Ovary (tissue), 10 donors: ENCODE measurements at regions of chr18 and their contacts with region 1.

Region 1: DNA sequence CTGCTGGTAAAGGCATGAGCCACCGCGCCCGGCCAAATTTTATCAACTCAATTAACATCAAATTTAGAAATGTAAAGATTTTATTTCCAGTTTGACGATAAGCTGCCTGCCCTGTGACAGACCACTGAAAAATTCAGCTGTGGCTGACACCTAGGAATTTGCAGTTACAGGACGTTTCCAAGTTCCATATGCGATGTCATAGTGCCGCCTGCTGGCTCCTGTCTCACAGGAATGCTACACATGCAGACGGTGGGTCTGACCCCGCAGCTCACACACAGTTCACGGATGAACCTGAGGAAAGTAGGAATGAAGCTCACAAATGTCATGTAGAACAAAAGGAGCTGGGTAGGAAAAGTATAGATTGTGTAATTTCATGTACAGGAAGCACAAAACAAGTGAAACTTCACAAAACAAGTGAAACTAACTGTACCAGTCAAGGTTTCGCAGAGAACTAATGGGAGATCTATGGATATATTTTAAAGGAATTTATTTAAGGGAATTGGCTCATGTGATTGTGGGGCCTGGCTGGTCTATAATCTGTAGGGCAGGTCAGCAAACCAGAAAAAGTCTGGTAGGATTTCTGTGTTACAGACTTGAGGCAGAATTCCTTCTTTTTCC is 13.2 kb upstream of the SEH1L start:
- DNase-seq: peak; percentile 76 to 90 (median 89)
- H3K4me3 ChIP-seq: no peak overlapping the region
- H3K27ac ChIP-seq: no peak overlapping the region
- H3K4me1 ChIP-seq: peaks cover 1% of the 10 kb centered on the region
- H3K27me3 ChIP-seq: no peaks in the 10 kb centered on the region
- CTCF ChIP-seq: peak; percentile 65 to 96 (median 92)
- EP300 ChIP-seq: no peak
- POLR2A ChIP-seq: no peak

Region 2: GRCh38 chr18:12726774-12727550 is 207.6 kb before region 1 on chr18:
- intact Hi-C with region 1: loop called (anchors 1 to 5 kb)
- DNase-seq: peak in 4 of 5 donors; percentile 37 to 64 (median 48)
- H3K4me3 ChIP-seq: no peak overlapping the region
- H3K27ac ChIP-seq: no peak overlapping the region
- H3K4me1 ChIP-seq: no peaks in the 10 kb centered on the region
- H3K27me3 ChIP-seq: no peaks in the 10 kb centered on the region
- CTCF ChIP-seq: peak; percentile 54 to 87 (median 83)
- EP300 ChIP-seq: no peak
- POLR2A ChIP-seq: no peak

Region 3: DNA sequence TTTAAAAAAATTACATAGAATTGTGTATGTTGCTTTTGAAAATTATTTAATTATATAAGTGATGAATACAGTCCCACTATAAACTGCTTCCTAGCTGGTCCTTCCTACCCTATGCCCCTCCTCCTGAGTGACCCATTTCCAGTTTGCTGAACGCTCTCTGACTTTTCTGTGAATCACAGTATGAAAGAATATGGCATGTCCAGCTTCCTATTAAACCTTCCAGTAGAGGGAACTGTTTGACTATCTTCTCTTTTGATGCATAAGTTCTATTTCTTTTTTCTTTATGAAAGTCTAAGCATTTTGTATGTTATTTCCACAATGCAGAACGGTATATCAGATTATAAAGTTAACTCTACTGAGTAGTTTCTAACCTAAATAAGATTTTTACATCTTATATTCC is 190.5 kb before region 1 on chr18:
- intact Hi-C with region 1: loop called in 2 of 4 experiments (anchors 5 kb)
- DNase-seq: no peak
- H3K4me3 ChIP-seq: no peak overlapping the region
- H3K27ac ChIP-seq: no peak overlapping the region
- H3K4me1 ChIP-seq: no peaks in the 10 kb centered on the region
- H3K27me3 ChIP-seq: no peaks in the 10 kb centered on the region
- CTCF ChIP-seq: peak in 2 of 3 donors; percentile 35 to 36
- EP300 ChIP-seq: no peak
- POLR2A ChIP-seq: no peak

Region 4: DNA sequence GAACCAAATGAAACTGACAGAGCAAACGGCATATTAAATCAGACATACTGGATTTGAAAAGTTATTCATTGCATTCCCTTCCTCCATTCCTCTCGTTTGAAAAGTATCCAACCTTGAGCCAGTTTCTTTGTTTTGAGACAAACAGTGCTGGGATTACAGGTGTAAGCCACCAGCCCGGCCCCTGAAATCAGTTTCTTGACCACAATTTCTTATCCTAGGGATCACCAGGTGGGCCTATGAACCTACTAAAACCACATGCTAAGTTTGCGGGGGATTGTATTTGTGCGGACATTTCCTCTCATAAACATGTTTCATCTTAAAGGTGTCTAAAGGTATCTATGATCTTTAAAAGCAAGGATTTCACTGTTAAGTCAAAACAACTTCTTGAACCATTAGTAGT is 62.2 kb before region 1 on chr18:
- intact Hi-C with region 1: no loop called
- DNase-seq: no peak
- H3K4me3 ChIP-seq: no peak overlapping the region
- H3K27ac ChIP-seq: no peak overlapping the region
- H3K4me1 ChIP-seq: peaks cover 2% of the 10 kb centered on the region
- H3K27me3 ChIP-seq: no peaks in the 10 kb centered on the region
- CTCF ChIP-seq: no peak
- EP300 ChIP-seq: no peak
- POLR2A ChIP-seq: no peak